T-cell (primary cell): ENCODE measurements at regions of chr16 and their contacts with region 1.

Region 1: DNA sequence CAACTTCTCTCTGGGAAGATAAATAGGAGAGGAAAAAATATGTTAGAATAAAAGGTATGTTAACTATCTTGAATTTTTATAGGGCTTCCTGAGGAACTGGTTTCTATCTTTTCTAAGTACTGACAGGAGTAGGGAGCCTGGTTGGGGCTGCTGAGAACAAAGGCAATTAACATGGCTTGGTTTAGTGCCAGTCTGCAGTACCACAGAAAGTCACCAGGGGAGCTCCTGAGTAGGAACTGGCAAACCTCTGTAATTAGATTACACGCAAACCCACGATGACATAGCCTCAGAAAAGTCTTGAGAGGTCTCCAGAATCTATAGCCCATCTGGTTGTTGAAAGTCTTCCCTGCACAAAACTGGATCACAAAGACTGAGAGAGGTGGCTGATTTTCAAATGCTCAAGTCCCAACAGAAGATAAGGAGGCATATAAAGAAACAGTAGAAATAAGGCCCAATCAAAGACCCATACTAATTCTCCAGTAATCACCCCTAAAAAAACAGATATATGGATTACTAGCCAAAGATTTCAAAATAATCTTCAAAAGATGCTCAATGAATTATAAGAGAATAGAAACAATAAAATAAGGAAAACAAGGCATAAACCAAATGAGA is 11.7 kb upstream of the CNTNAP4 start:
- DNase-seq: no peak
- ATAC-seq: no peak
- H3K4me3 ChIP-seq: no peak overlapping the region
- H3K4me3 Mint-ChIP-seq: no peak overlapping the region
- H3K27ac ChIP-seq: no peak overlapping the region
- H3K27ac Mint-ChIP-seq: no peak overlapping the region
- H3K4me1 ChIP-seq: no peaks in the 10 kb centered on the region
- H3K4me1 Mint-ChIP-seq: no peaks in the 10 kb centered on the region
- H3K27me3 ChIP-seq: no peaks in the 10 kb centered on the region
- H3K27me3 Mint-ChIP-seq: peaks cover 0 to 4% of the 10 kb centered on the region in 2 donors

Region 2: DNA sequence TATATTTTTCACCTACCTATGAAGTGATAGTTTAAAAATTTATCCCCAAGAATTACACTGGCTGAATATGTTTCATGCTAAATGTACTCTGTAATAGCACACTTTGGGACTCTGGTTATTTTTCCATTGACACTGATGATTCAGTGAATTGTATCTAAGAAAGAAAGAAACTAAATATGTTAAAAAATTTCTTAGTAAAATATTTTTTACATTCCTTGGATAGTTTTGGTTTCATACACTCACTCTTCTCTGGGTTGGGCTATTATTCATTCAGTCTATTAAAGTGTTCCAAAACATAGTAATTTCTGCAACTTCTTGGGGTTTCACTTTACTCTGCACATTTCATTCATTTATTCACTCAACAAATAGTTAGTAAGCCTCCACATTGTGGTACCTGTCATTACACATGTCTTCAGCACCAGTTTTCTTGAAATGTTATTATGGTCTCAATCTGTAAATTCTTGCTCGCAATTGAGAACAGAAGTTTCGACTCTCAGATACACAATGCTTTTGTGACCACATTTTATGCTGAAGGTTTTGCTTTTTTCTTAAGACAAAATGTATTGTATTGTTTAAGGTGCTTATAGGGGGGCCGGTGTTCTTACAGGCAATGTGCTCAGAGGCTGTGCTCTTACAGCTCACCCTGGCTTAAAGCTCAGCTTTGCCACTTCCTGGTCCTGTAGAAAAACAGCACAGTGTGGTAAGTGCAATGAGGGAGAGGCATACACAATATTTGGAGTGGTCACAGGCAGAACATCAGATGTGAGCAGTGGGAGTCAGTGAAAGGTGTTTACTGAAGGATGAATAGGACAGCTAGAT is 29.1 kb after region 1 on chr16:
- CTCF ChIA-PET with region 1: no interaction called
- POLR2A ChIA-PET with region 1: interaction called in 1 of 2 experiments, 13 read pairs
- DNase-seq: no peak
- ATAC-seq: no peak
- H3K4me3 ChIP-seq: no peak overlapping the region
- H3K4me3 Mint-ChIP-seq: no peak overlapping the region
- H3K27ac ChIP-seq: no peak overlapping the region
- H3K27ac Mint-ChIP-seq: no peak overlapping the region
- H3K4me1 ChIP-seq: no peaks in the 10 kb centered on the region
- H3K4me1 Mint-ChIP-seq: no peaks in the 10 kb centered on the region
- H3K27me3 ChIP-seq: no peaks in the 10 kb centered on the region
- H3K27me3 Mint-ChIP-seq: no peaks in the 10 kb centered on the region